CD8-positive, alpha-beta memory T cell (primary cell): ENCODE measurements at regions of chr19 and their contacts with region 1.

Region 1: DNA sequence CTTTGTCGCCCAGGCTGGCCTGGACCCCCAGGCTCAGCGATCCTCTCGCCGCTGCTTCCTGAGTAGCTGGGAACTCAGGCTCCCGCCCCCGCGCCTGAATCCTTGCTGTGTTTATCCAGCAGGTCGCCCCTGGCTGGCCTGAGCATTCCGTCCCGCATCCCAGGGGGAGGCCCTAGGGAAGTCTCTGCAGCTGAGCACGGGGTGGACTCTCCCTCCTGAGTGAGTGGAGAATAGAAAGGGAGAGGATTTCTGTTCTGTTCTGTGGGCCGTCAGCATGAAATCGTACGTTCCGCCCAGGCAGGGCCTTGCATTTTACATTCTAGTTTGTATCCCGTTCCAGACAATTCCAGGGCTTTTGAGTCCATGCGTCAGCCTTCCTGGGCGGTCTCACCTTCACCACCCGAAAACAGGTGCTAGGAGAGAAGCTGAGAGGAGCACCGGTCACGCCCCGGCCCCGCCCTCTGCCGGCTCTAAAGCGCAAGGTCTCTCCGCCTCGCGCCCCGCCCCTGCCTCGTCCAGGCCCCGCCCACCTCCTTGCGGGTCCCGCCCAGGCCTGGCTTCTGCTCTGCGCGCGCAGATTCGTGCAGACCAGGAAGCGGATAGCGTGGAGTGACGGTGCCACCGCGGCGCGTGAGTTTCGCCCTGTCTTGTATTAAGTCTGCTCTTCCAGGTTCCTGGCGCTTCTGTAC is at the start of gene ZNF761:
- DNase-seq: peak; percentile 96 to 98 (median 97)
- H3K4me3 ChIP-seq: peak within 1 kb of the TSS; percentile 95
- H3K4me3 Mint-ChIP-seq: peak within 1 kb of the TSS; percentile 96 to 100 (median 98)
- H3K27ac ChIP-seq: peak within 1 kb of the TSS; percentile 84
- H3K27ac Mint-ChIP-seq: peak within 1 kb of the TSS; percentile 89 to 99 (median 97)
- H3K4me1 ChIP-seq: peaks cover 13% of the 10 kb centered on the region
- H3K4me1 Mint-ChIP-seq: peaks cover 34 to 52% (median 39%) of the 10 kb centered on the region in 3 donors
- H3K27me3 ChIP-seq: no peaks in the 10 kb centered on the region
- H3K27me3 Mint-ChIP-seq: peaks cover 0 to 5% of the 10 kb centered on the region in 2 donors
- total RNA-seq, gene ZNF761: 8.9 to 10.6 TPM

Region 2: GRCh38 chr19:53485046-53486004 is 53.8 kb after region 1 on chr19:
- CTCF ChIA-PET with region 1: no interaction called
- POLR2A ChIA-PET with region 1: no interaction called
- DNase-seq: no peak
- H3K4me3 ChIP-seq: no peak overlapping the region
- H3K4me3 Mint-ChIP-seq: no peak overlapping the region
- H3K27ac ChIP-seq: no peak overlapping the region
- H3K27ac Mint-ChIP-seq: no peak overlapping the region
- H3K4me1 ChIP-seq: no peaks in the 10 kb centered on the region
- H3K4me1 Mint-ChIP-seq: no peaks in the 10 kb centered on the region
- H3K27me3 ChIP-seq: no peaks in the 10 kb centered on the region
- H3K27me3 Mint-ChIP-seq: no peaks in the 10 kb centered on the region

Region 3: GRCh38 chr19:53670380-53670779 is 238.8 kb after region 1 on chr19:
- CTCF ChIA-PET with region 1: no interaction called
- POLR2A ChIA-PET with region 1: interaction called, 11 read pairs
- DNase-seq: no peak
- H3K4me3 ChIP-seq: no peak overlapping the region
- H3K4me3 Mint-ChIP-seq: peak overlapping the region in 1 of 7 donors; percentile 36
- H3K27ac ChIP-seq: no peak overlapping the region
- H3K27ac Mint-ChIP-seq: no peak overlapping the region
- H3K4me1 ChIP-seq: no peaks in the 10 kb centered on the region
- H3K4me1 Mint-ChIP-seq: no peaks in the 10 kb centered on the region
- H3K27me3 ChIP-seq: no peaks in the 10 kb centered on the region
- H3K27me3 Mint-ChIP-seq: peaks cover 0 to 2% of the 10 kb centered on the region in 2 donors